ENCODE measurements at regions of chr7 and their contacts with region 1.

Region 1: DNA sequence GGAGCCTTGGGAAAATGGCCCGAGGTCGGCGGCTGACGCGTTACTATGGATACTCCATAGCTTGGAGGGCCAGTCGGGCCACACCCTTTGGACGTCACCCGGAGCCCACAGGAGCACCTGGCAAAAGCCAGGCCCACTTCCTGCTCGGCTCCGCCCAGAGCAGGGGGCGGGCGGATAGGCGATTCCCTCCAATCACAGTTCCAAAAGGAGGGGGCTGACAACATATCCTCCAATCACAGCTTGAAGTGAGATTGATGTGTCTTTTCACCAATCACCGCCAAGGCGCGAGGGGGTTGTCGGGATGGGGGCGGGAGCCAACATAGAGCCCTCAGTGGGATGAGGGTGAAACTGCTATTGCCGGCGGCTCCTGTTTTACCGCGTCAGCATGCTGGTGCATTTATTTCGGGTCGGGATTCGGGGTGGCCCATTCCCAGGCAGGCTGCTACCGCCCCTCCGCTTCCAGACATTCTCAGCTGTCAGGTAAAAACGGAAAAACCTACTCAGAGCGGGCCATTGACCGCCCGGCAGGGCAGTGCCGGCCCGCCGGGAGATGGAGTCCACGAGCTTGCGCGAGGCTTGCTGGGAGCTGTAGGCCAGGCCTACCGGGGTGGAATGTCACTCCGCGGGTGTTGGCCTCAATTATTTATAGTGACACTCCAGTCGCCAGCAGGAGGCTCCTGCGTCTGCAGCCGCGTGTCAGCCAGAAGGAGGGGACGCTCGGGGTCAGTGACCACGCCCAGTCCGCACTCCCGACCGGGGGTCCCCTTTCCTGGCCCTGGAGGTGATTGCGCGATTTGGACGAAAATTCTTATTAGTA is at the start of gene ABCB8:
- H3K4me3 Mint-ChIP-seq: peak within 1 kb of the TSS; percentile 93
- H3K27ac Mint-ChIP-seq: peak within 1 kb of the TSS; percentile 91
- H3K4me1 Mint-ChIP-seq: peaks cover 47% of the 10 kb centered on the region
- H3K27me3 Mint-ChIP-seq: peaks cover 27% of the 10 kb centered on the region

Region 2: GRCh38 chr7:150845421-150845861 is 182.9 kb before region 1 on chr7:
- intact Hi-C with region 1: no loop called
- H3K4me3 Mint-ChIP-seq: no peak overlapping the region
- H3K27ac Mint-ChIP-seq: peak overlapping the region; percentile 82
- H3K4me1 Mint-ChIP-seq: peaks cover 34% of the 10 kb centered on the region
- H3K27me3 Mint-ChIP-seq: peaks cover 17% of the 10 kb centered on the region

Region 3: DNA sequence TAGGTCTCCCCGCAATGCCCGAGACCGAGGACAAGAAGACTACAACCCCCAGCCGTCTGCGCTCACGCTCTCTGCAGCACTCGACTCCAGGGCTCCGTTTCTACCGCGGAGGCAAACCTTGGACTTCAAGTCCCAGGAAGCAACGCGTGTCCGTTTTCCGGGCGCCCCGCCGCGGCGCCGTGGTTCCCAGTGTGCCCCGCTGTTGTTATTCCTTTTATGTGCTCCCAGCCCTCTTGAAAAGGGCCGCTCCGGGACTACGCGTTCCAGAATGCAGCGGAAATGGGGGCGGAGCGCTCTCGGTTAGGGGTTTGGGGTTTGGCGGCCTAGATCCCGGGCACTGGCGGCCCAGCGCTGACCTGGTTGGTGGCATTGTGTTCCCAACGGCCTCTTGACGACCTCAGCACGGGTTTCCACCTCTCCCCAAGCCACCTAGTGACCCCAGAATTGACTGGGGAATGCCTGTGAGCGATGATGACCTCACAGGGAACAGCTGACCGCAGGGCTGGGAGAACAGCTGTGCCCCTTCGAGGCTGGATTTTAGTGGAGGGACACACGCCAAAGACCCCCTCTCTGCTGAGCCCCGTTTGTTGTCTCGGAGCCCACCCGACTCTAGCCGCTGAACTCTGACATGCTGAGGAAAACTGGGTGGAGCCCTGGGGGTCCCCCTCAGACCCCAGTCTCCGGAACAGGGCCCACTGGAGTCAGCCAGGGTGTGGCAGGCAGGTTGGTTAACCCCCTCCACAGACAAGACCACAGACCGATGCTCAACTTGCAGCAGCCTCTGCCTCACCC is 29.8 kb after region 1 on chr7:
- intact Hi-C with region 1: loop called (anchors 1 kb)
- H3K4me3 Mint-ChIP-seq: peak overlapping the region; percentile 91
- H3K27ac Mint-ChIP-seq: peak overlapping the region; percentile 92
- H3K4me1 Mint-ChIP-seq: peaks cover 68% of the 10 kb centered on the region
- H3K27me3 Mint-ChIP-seq: no peaks in the 10 kb centered on the region

Region 4: GRCh38 chr7:151080522-151081169 is 52.3 kb after region 1 on chr7 and contains the start of gene FASTK:
- intact Hi-C with region 1: loop called (anchors 1 kb)
- H3K4me3 Mint-ChIP-seq: peak within 1 kb of the TSS; percentile 86
- H3K27ac Mint-ChIP-seq: peak within 1 kb of the TSS; percentile 89
- H3K4me1 Mint-ChIP-seq: peaks cover 65% of the 10 kb centered on the region
- H3K27me3 Mint-ChIP-seq: no peaks in the 10 kb centered on the region

Region 5: GRCh38 chr7:151085691-151086620 is 57.6 kb after region 1 on chr7 and contains the start of gene AGAP3:
- intact Hi-C with region 1: loop called (anchors 1 kb)
- H3K4me3 Mint-ChIP-seq: peak within 1 kb of the TSS; percentile 79
- H3K27ac Mint-ChIP-seq: peak within 1 kb of the TSS; percentile 96
- H3K4me1 Mint-ChIP-seq: peaks cover 63% of the 10 kb centered on the region
- H3K27me3 Mint-ChIP-seq: no peaks in the 10 kb centered on the region

Measured in dendritic cell treated with granulocyte-macrophage colony-stimulating factor and Interleukin-4, amounts not matched to agents 40 ng/mL and 50 ng/mL, for 4 days (primary cell).